ENCODE measurements at regions of chr17 and their contacts with region 1.

Region 1: GRCh38 chr17:4366327-4367063 is at the start of gene UBE2G1:
- DNase-seq: peak; percentile 100
- H3K4me3 Mint-ChIP-seq: peak within 1 kb of the TSS; percentile 73
- H3K27ac Mint-ChIP-seq: peak within 1 kb of the TSS; percentile 91
- H3K4me1 Mint-ChIP-seq: peaks cover 33% of the 10 kb centered on the region
- H3K27me3 Mint-ChIP-seq: no peaks in the 10 kb centered on the region
- total RNA-seq, gene UBE2G1: 54.4 to 57.6 TPM

Region 2: GRCh38 chr17:4263282-4264215 is 102.9 kb before region 1 on chr17 and contains the start of gene ANKFY1:
- CTCF ChIA-PET with region 1: no interaction called
- POLR2A ChIA-PET with region 1: no interaction called
- intact Hi-C with region 1: loop called (anchors 2 kb)
- DNase-seq: peak; percentile 99
- H3K4me3 Mint-ChIP-seq: peak within 1 kb of the TSS; percentile 89
- H3K27ac Mint-ChIP-seq: peak within 1 kb of the TSS; percentile 82
- H3K4me1 Mint-ChIP-seq: peaks cover 35% of the 10 kb centered on the region
- H3K27me3 Mint-ChIP-seq: no peaks in the 10 kb centered on the region
- total RNA-seq, gene ANKFY1: 34.6 to 40.5 TPM

Region 3: DNA sequence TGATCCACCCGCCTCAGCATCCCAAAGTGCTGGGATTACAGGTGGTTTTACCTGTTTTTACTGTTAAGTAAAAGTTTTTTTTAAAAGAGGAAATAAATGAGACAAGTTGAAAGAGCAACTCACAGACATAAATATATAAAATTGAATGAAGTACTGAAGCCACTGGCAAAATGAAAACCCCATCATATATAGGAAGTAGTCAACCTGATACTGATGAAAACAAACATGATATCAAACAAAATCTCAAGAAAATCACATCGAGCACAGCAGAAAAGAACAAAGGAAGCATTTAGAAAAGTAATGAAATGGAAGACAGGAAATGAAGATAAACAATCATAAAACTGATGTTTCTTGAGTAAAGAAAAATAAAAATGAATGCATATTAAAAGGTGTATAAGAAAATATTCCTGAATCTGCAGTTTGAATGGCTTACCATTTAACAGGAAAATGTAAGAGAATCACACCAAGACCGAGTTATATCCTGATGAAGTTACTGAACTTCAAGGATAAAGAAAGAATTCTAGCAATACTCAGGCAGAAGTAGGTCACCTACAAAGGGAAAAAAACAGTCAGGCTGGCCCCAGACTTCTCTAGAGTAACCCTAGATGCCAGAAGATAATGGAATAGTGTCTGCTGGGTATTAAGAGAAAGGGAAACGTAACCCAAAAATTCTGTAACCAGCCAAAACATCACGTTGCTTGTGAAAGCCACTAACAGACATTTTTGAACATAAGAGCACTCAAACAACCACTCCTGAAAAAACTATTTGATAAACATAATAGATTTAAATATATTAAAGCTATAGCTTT is 31.5 kb before region 1 on chr17:
- CTCF ChIA-PET with region 1: no interaction called
- POLR2A ChIA-PET with region 1: no interaction called
- intact Hi-C with region 1: loop called (anchors 2 kb)
- DNase-seq: no peak
- H3K4me3 Mint-ChIP-seq: no peak overlapping the region
- H3K27ac Mint-ChIP-seq: peak overlapping the region; percentile 38
- H3K4me1 Mint-ChIP-seq: peaks cover 49% of the 10 kb centered on the region
- H3K27me3 Mint-ChIP-seq: no peaks in the 10 kb centered on the region

Region 4: GRCh38 chr17:4345581-4346252 is 20.8 kb before region 1 on chr17:
- CTCF ChIA-PET with region 1: no interaction called
- POLR2A ChIA-PET with region 1: no interaction called
- intact Hi-C with region 1: no loop called
- DNase-seq: no peak
- H3K4me3 Mint-ChIP-seq: no peak overlapping the region
- H3K27ac Mint-ChIP-seq: no peak overlapping the region
- H3K4me1 Mint-ChIP-seq: peaks cover 19% of the 10 kb centered on the region
- H3K27me3 Mint-ChIP-seq: no peaks in the 10 kb centered on the region

Region 5: GRCh38 chr17:4412933-4413831 is 46.7 kb after region 1 on chr17:
- CTCF ChIA-PET with region 1: interaction called, 3 read pairs
- POLR2A ChIA-PET with region 1: no interaction called
- intact Hi-C with region 1: loop called (anchors 1 kb)
- DNase-seq: peak; percentile 95
- H3K4me3 Mint-ChIP-seq: peak overlapping the region; percentile 68
- H3K27ac Mint-ChIP-seq: peak overlapping the region; percentile 38
- H3K4me1 Mint-ChIP-seq: peaks cover 6% of the 10 kb centered on the region
- H3K27me3 Mint-ChIP-seq: no peaks in the 10 kb centered on the region

Region 6: GRCh38 chr17:4733073-4733531 is 366.6 kb after region 1 on chr17:
- CTCF ChIA-PET with region 1: no interaction called
- POLR2A ChIA-PET with region 1: no interaction called
- intact Hi-C with region 1: loop called (anchors 5 kb)
- DNase-seq: no peak
- H3K4me3 Mint-ChIP-seq: peak overlapping the region; percentile 20
- H3K27ac Mint-ChIP-seq: no peak overlapping the region
- H3K4me1 Mint-ChIP-seq: peaks cover 29% of the 10 kb centered on the region
- H3K27me3 Mint-ChIP-seq: peaks cover under 1% of the 10 kb centered on the region